ENCODE measurements at regions of chr1 and their contacts with region 1.

Region 1: GRCh38 chr1:113072757-113073478 is at the start of gene LRIG2:
- DNase-seq: peak; percentile 97
- H3K4me3 ChIP-seq: peak within 1 kb of the TSS; percentile 87
- H3K27ac ChIP-seq: peak within 1 kb of the TSS; percentile 74
- H3K4me1 ChIP-seq: peaks cover 27% of the 10 kb centered on the region
- CTCF ChIP-seq: peak; percentile 97; the same call in 1 of the 2 replicates
- total RNA-seq, gene LRIG2: 11.6 and 11.9 TPM in 2 replicates

Region 2: DNA sequence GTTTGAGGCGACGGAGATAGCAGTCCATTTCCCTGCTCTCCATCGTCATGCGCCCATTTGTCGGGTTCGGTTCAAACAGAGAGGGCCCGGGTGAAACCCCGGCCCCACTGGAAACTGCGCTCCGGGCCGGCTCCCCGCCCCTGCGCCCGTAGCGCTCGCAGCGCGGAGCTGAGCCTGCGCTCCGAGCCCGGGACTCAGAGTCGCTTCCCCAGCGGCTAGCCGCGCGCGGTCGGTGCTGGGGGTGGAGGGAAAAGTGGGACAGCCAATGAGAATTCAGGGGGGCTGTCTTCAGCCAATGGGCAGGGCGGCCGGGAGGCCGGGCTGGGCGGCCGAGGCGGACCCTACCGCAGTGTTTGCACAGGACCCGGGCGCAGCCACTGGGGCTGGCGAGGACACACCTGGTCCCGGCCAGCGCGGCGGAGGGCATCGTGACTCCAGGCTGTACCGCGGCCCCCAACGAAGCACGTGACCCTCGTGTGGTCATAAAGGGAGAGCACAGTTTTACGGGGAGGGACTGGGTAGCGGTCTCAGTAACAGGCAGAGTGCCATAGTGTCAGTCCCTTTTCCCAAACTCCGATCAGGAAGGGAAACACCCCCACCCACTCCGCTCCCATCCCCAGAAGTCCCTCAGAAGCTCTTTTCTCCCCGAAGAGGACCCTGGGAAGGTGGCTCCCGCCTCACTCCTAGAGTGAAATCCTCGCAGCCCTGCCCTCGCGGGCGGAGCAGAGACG is 1333.6 kb before region 1 on chr1 and contains the start of gene INKA2:
- CTCF ChIA-PET with region 1: interaction called, 11 read pairs
- POLR2A ChIA-PET with region 1: no interaction called
- intact Hi-C with region 1: no loop called
- DNase-seq: peak; percentile 87
- H3K4me3 ChIP-seq: peak within 1 kb of the TSS; percentile 78
- H3K27ac ChIP-seq: peak within 1 kb of the TSS; percentile 44
- H3K4me1 ChIP-seq: peaks cover 32% of the 10 kb centered on the region
- CTCF ChIP-seq: no peak; the same call in 1 of the 2 replicates
- total RNA-seq, gene INKA2: 3.9 and 4.1 TPM in 2 replicates

Region 3: DNA sequence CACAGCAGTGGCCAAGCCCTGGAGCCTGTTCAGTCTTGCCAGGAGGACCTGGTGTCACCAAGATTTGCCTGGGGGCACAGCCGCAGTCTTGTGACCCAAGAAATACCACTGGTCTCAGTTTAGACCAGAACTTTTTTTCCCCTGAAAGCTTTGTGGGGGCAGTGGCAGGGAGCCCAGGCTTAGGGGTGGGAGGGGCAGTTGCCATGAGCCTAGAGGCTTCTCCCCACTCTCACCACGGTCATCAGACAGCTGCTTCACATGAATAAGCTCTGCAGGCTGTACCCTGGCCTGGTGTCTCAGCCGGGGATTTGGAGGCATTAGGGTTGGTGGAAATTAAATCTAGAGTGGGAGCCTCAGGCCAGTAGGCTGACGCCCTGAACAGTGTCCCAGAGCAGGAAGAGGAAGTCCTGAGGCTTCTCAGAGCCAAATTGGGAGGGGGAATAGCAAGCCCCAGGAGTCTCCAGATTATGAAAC is 190.6 kb before region 1 on chr1:
- CTCF ChIA-PET with region 1: interaction called, 12 read pairs
- POLR2A ChIA-PET with region 1: interaction called, 3 read pairs
- intact Hi-C with region 1: loop called (anchors 2 kb)
- DNase-seq: no peak
- H3K4me3 ChIP-seq: no peak overlapping the region
- H3K27ac ChIP-seq: no peak overlapping the region
- H3K4me1 ChIP-seq: no peaks in the 10 kb centered on the region
- CTCF ChIP-seq: no peak

Region 4: GRCh38 chr1:112955781-112956543 is 117.0 kb before region 1 on chr1 and contains the start of gene SLC16A1:
- CTCF ChIA-PET with region 1: interaction called, 3 read pairs
- POLR2A ChIA-PET with region 1: interaction called, 6 read pairs
- intact Hi-C with region 1: loop called (anchors 2 kb)
- DNase-seq: peak; percentile 94
- H3K4me3 ChIP-seq: peak within 1 kb of the TSS; percentile 88
- H3K27ac ChIP-seq: peak within 1 kb of the TSS; percentile 87
- H3K4me1 ChIP-seq: peaks cover 45% of the 10 kb centered on the region
- CTCF ChIP-seq: peak; percentile 35; the same call in 1 of the 2 replicates
- total RNA-seq, gene SLC16A1: 50.9 and 56.1 TPM in 2 replicates

Region 5: GRCh38 chr1:113153116-113153803 is 80.3 kb after region 1 on chr1:
- CTCF ChIA-PET with region 1: no interaction called
- POLR2A ChIA-PET with region 1: no interaction called
- intact Hi-C with region 1: no loop called
- DNase-seq: no peak
- H3K4me3 ChIP-seq: no peak overlapping the region
- H3K27ac ChIP-seq: no peak overlapping the region
- H3K4me1 ChIP-seq: peaks cover 5% of the 10 kb centered on the region
- CTCF ChIP-seq: no peak

Region 6: DNA sequence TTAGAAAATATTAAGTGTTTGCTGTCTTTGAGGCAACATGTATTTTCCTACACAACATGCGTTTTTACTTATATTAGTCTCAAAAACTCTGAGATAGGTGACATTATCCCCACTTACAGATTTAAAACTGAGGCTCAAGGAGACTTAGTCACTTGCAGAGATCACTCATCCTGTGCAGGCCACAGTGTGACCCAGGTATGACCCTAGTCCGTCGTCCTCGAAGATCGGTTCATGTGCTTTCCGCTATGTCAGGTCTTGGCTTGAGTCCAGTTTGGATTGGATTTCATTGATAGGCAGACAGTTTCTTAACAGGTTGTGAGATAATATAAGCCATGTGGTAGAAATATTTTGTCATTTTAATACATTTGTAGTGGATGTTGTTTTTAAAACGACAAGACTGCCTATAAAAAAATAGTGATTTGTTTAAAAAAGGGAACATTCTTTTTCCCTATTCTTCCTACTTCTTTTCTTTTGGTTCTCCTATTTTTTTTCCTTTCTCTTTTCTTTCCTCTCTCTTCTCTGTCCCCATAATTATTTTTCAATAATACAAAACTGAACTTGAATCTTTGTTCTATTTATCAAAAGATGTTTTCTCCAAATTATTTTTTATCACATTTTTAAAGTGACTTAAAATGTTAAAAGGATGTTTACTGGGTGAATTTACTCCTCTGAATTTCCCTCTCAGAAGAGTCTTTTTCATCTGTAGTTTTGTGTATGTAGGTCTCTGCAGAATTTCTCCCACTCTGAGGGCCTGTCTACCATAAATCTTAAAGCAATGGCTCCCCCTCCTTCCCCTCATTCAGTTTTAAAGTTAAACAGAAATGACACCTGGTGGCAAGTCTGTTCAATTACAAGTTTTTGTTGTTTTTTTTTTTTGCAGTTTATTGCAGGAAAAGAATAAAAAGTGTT is 604.6 kb after region 1 on chr1:
- CTCF ChIA-PET with region 1: no interaction called
- POLR2A ChIA-PET with region 1: no interaction called
- intact Hi-C with region 1: loop called (anchors 2 kb)
- DNase-seq: peak; percentile 56
- H3K4me3 ChIP-seq: no peak overlapping the region
- H3K27ac ChIP-seq: no peak overlapping the region
- H3K4me1 ChIP-seq: no peaks in the 10 kb centered on the region
- CTCF ChIP-seq: peak; percentile 90